ENCODE measurements at regions of chr3 and their contacts with region 1.

Region 1: DNA sequence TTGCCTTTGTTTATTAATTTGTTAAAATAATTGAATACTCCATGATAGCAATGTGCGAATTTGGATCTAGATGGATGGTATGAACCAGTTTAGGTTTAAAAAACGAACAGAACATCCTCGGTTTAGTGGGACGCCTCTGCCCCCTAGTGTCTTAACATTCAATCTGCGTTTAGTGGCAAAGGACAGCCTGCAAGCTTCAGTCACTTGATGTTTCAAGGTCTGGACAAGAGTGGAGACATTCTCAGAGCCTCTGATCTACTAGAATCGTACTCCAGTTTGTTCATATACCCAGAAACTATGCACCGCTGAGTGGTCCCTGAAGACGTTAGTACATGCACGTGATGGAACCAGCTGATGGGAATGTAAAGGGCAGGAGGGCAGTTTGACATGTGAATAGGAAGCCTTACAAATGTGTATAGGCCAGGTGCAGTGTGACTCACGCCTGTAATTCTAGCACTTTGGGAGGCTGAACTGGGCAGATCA is 17.8 kb upstream of the ATP13A4 start:
- DNase-seq: peak; percentile 66 to 82
- H3K4me3 ChIP-seq: no peak overlapping the region
- H3K4me1 ChIP-seq: no peaks in the 10 kb centered on the region
- H3K27me3 ChIP-seq: peaks cover 2% of the 10 kb centered on the region; the same call in 1 of the 2 replicates

Region 2: DNA sequence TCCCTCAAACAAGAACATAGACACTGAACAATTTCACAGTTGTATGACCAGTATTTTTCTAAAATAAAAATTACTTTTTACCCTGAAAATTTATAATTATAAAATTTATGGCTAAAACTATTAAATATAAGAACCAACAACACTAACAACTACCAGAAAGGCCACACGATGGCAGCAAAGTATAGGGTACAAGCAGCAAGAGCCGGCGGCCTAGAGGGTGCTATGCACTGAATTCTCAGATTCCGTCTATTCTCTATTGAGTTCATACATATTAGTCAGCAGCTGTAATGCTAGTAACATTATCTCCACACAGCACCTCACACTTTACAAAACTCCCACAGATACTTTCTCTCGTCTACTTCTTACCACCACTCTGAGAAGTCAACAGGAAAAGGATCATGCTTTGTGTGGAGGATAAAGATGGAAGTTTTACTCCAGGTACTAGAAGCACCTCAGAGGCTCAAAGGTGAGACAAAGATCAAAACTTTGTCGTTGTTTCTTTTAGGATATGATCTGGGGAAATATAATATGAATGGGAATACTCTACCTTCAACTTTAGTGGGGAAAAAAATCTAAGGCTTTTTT is 1005.7 kb before region 1 on chr3:
- in situ Hi-C with region 1: loop called (anchors 10 kb)
- DNase-seq: peak; percentile 69 to 81
- H3K4me3 ChIP-seq: no peak overlapping the region
- H3K4me1 ChIP-seq: peaks cover 3% of the 10 kb centered on the region
- H3K27me3 ChIP-seq: 0 out of 2 replicates have a peak, but pooled peaks cover 3% of the 10 kb centered on the region

Region 3: DNA sequence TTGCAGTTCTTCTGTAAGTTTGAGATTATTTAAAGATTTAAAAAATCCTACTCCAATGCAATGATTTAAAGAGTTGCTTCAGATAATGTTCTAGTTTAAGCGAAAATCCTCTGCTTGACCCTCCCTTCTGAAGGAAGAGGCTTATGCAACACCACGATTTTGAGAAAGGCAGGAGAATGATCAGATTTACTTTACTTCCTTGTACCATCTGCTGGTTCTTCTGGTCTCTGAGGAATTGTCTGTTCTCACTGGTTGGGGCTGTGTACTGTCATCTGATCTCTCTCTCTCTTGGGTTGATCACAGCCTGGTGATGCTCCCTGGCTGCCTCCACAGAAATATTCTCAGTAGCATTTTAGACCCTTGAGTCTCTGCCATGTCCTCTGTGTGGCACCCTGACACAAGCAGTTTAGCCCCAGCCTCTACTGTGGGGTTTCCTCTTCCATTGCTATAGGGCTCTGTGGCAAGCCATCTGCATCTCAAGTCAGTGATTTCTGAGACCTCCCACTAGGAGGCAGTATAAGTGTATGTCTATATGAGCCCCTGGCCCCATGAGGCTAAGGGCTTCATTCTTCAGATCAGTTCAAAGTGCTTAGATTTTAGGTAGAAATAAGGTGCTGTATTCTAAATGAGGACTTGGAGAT is 382.2 kb before region 1 on chr3:
- in situ Hi-C with region 1: loop called (anchors 25 kb)
- DNase-seq: peak; percentile 60 to 65
- H3K4me3 ChIP-seq: no peak overlapping the region
- H3K4me1 ChIP-seq: no peaks in the 10 kb centered on the region
- H3K27me3 ChIP-seq: no peaks in the 10 kb centered on the region

Measured in HAP-1 (cell line).